ENCODE measurements at regions of chr6 and their contacts with region 1.

Region 1: GRCh38 chr6:52598123-52598823 is 21.4 kb upstream of the TRAM2 start:
- DNase-seq: no peak
- H3K4me3 ChIP-seq: no peak overlapping the region
- CTCF ChIP-seq: peak in 1 of 3 donors; percentile 49
- POLR2A ChIP-seq: no peak

Region 2: DNA sequence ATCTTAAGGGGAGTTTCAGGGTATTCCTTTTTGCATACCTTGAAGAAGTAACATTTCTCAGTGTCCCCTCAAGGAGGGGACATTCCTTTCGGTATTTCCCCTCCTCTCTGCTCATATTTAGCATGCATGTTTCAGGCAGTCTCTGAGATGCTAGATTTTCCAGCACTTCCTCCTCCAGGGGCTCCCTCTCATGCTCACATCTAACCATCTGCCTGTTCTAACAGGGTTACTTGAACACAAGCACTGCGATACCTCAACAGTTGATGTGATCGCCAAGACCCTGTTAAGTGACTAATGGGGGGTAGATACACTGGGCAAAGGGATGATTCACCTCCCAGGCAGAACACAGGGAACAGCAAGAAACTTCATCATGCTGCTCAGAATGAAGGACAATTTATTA is 300.8 kb before region 1 on chr6:
- intact Hi-C with region 1: no loop called
- DNase-seq: no peak
- H3K4me3 ChIP-seq: no peak overlapping the region
- CTCF ChIP-seq: no peak
- POLR2A ChIP-seq: no peak

Region 3: GRCh38 chr6:52419809-52420670 is 178.2 kb before region 1 on chr6 and contains the start of gene EFHC1:
- intact Hi-C with region 1: loop called (anchors 10 kb)
- DNase-seq: peak; percentile 98 to 99
- H3K4me3 ChIP-seq: peak within 1 kb of the TSS; percentile 61
- CTCF ChIP-seq: no peak
- POLR2A ChIP-seq: no peak
- total RNA-seq, gene EFHC1: 12.2 to 22.8 (median 18.1) TPM